Activated B cell treated with CpG ODN at 0.5 μM for 24 hours (primary cell): ENCODE measurements at regions of chr19 and their contacts with region 1.

Region 1: GRCh38 chr19:13181747-13182388 is 31.7 kb downstream of the IER2 start:
- DNase-seq: no peak
- ATAC-seq: peak; percentile 66
- H3K4me3 Mint-ChIP-seq: peak overlapping the region; percentile 49
- H3K27ac Mint-ChIP-seq: peak overlapping the region; percentile 46
- H3K4me1 Mint-ChIP-seq: peaks cover 33% of the 10 kb centered on the region
- H3K27me3 Mint-ChIP-seq: no peaks in the 10 kb centered on the region
- CTCF ChIP-seq: no peak

Region 2: DNA sequence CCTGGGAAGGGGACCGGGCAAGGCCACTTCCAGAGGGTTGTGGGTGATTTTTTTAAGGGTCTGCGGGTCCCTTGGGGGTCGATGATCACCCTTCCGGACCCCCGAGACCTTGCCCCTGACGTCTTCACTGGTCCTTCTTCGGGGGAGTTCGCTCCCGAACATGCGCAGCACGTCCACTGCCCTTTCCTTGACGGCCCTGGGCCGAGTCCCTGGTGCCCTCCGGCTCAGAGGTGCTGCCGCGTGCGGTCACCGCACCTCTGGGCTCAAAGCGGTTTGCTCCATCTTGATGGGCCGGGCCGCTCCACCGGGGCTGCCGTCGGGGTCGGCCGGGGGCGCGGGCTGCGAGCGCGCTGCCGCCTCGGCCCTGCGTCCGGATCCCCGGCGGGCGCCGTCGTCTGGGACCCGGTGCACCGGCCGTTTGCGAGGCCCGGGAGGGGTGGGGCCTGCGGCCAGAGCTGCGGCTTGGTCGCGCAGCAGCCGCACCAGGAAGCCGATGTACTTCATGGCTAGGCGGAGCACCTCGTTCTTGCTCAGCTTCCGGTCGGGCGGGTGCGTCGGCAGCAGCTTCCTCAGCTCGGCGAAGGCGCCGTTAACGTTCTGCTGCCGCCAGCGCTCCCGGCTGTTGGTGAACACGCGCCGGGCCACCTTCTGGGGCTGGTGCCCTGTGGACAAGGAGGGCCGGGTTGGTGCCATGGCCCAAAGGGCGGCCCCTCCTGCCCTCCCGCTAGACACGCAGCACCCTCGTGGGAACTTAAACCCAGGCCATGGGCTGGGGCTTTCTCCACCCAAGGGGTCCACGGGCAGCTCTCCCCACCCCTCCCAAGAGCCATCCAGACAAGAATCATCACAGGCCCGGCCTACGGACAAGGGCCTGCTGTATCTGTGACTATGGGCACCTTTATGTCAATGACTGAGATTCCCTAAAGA is 82.5 kb before region 1 on chr19:
- CTCF ChIA-PET with region 1: no interaction called
- POLR2A ChIA-PET with region 1: interaction called, 16 read pairs
- intact Hi-C with region 1: no loop called
- DNase-seq: peak; percentile 70
- ATAC-seq: peak; percentile 2
- H3K4me3 Mint-ChIP-seq: peak overlapping the region; percentile 88
- H3K27ac Mint-ChIP-seq: peak overlapping the region; percentile 93
- H3K4me1 Mint-ChIP-seq: peaks cover 76% of the 10 kb centered on the region
- H3K27me3 Mint-ChIP-seq: no peaks in the 10 kb centered on the region
- CTCF ChIP-seq: no peak